Sciatic nerve (tissue), 2 donors: ENCODE measurements at regions of chr4 and their contacts with region 1.

Region 1: DNA sequence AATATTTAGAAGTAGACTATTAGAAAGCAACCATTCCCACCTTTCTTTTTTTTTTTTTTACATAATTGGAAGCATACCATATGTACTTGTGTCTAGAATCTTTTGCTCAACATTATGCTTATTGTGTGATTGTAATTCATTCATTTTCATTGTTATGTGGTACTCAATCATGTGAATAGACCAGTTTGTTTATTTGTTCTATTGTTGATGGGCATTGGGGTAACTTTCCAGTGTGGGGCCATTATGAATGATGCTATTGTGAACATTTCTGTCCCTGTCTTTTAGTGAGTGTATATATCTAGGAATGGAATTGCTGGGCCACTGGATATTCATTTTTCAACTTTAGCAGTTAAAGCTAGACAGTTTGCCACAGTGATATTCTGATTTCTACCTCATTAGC is 62.5 kb upstream of the MCUB start:
- DNase-seq: no peak
- ATAC-seq: no peak

Region 2: DNA sequence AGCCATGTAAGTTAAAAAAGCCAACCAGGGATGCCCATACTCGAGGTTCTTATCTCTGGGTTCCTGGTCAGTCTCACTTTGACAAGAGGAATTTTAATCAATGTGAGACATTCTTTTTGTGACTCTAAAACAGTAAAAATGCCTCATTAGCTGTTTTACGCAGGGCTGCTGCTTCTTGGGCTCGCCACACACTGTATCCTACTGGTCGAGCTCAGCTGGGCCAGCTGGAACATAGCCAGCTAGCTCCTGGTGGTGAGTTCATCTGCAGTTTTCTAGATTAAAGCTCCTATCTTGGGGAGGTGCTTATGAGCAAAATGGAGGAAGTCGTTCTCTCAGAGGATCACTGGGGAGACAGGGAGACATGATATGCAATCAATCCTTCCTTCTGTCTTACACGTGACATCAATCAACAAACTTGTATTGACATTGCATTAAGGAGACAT is 1272.9 kb before region 1 on chr4:
- intact Hi-C with region 1: loop called (anchors 5 kb)
- DNase-seq: no peak
- ATAC-seq: no peak